Heart left ventricle (tissue), 16 donors: ENCODE measurements at regions of chr9 and their contacts with region 1.

Region 1: GRCh38 chr9:38183994-38184568 is 115.1 kb upstream of the SHB start:
- DNase-seq: no peak
- ATAC-seq: no peak
- H3K4me3 ChIP-seq: no peak overlapping the region
- H3K27ac ChIP-seq: no peak overlapping the region
- H3K4me1 ChIP-seq: no peaks in the 10 kb centered on the region
- H3K27me3 ChIP-seq: no peaks in the 10 kb centered on the region
- CTCF ChIP-seq: no peak
- POLR2A ChIP-seq: no peak

Region 2: GRCh38 chr9:38134578-38135237 is 49.4 kb before region 1 on chr9:
- intact Hi-C with region 1: loop called in 1 of 10 experiments (anchors 5 kb)
- DNase-seq: no peak
- ATAC-seq: no peak
- H3K4me3 ChIP-seq: no peak overlapping the region
- H3K27ac ChIP-seq: no peak overlapping the region
- H3K4me1 ChIP-seq: no peaks in the 10 kb centered on the region
- H3K27me3 ChIP-seq: peaks cover 0 to 9% (median 0%) of the 10 kb centered on the region in 9 donors
- CTCF ChIP-seq: no peak
- POLR2A ChIP-seq: no peak

Region 3: GRCh38 chr9:38164659-38165221 is 19.3 kb before region 1 on chr9:
- intact Hi-C with region 1: no loop called
- DNase-seq: no peak
- ATAC-seq: no peak
- H3K4me3 ChIP-seq: no peak overlapping the region
- H3K27ac ChIP-seq: no peak overlapping the region
- H3K4me1 ChIP-seq: no peaks in the 10 kb centered on the region
- H3K27me3 ChIP-seq: no peaks in the 10 kb centered on the region
- CTCF ChIP-seq: no peak
- POLR2A ChIP-seq: no peak

Region 4: DNA sequence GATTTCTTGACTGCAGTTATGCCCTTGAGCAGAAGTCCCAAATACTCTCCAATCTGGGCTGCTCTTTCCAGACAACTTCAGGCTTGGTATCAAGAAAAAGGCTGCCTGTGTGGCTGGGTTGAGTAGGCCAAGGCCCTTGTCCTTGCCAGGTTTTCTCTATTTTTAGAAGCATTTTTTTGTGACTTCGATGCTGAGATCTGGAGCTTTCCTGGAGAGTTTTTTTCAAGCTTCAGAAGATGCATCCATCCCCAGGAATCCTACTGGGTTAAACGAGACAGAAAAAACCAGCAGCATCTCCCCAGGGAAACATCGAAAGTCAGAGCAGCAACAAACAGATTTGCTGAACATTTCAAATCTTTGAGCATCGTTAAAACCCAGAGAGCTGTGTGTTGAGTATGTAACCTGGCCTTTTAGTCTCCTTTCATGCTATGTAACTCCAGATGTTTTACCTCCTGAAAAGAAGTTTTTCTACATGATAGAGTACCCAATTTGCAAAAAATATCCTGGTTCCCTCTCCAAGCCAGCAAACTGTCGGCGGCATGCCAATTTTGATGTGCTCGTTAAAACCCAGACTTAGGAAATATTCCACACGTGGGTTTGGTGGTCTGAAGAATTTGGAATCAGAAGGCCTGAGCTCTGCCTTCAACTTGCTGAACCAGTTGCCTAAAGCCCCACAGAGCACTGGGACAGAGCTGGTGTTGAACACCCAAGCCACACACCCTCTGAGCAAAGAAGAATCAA is 110.3 kb after region 1 on chr9:
- intact Hi-C with region 1: loop called in 1 of 10 experiments (anchors 10 kb)
- DNase-seq: no peak
- ATAC-seq: peak in 1 of 4 donors; percentile 40
- H3K4me3 ChIP-seq: no peak overlapping the region
- H3K27ac ChIP-seq: no peak overlapping the region
- H3K4me1 ChIP-seq: peaks cover 0 to 15% (median 7%) of the 10 kb centered on the region in 12 donors
- H3K27me3 ChIP-seq: no peaks in the 10 kb centered on the region
- CTCF ChIP-seq: no peak
- POLR2A ChIP-seq: no peak